H1 (cell line): ENCODE measurements at regions of chr10 and their contacts with region 1.

Region 1: DNA sequence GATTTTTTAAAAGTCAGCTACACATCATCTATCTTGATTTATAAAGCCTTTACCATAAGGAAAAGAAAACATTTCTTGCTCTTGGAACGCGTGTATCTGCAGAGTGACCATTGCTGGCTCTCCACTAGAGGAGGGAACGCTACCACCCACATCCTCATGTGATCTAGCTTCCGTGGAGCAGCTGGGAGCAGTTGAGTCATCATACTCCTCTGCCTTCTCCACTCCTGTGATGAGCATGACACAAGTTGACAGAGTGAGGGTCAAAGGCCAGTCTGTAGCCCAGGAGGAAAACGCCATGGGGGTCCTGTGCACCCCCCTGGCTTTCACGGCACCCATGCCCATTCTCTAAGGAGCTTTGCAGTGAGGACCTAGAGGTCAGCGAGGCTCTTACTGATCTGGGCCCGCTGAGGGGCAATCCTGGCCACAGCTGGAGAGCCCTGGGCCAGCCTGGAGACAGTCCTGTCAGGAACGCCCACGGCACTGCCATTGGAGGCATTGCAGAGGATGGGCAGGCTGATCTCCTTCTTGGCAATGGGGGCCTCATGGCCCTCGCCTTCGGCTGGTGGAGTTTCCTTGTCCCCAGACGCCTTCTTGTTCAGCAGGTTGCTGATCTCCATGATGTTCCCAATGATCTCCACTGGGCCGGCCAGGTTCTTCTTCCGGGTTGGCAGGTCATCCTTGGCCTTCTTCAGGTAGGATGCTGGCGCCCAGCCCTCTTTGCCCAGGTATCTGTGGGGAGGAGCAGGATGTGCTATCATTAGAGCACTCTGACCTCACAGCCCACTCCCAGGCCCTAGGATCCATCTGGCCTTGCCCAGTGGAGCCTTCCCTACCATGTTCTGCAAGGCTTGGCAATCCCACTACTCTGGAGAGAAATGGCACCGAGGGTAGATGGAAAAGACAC is 119.2 kb downstream of the NEURL1 start:
- DNase-seq: no peak
- H3K4me3 ChIP-seq: no peak overlapping the region
- H3K27ac ChIP-seq: no peak overlapping the region
- H3K4me1 ChIP-seq: no peaks in the 10 kb centered on the region
- H3K27me3 ChIP-seq: no peaks in the 10 kb centered on the region; a peak in 1 of 7 replicates
- CTCF ChIP-seq: no peak
- EP300 ChIP-seq: no peak
- POLR2A ChIP-seq: no peak
- RAD21 ChIP-seq: no peak

Region 2: GRCh38 chr10:103666087-103666761 is 53.5 kb after region 1 on chr10:
- CTCF ChIA-PET with region 1: interaction called, 16 read pairs
- POLR2A ChIA-PET with region 1: interaction called, 3 read pairs
- DNase-seq: peak in 1 of 2 experiments; percentile 76
- H3K4me3 ChIP-seq: no peak overlapping the region
- H3K27ac ChIP-seq: no peak overlapping the region
- H3K4me1 ChIP-seq: peaks cover 10 to 27% (median 17%) of the 10 kb centered on the region in 4 experiments
- H3K27me3 ChIP-seq: no peaks in the 10 kb centered on the region; a peak in 1 of 7 replicates
- CTCF ChIP-seq: peak; percentile 43 to 71 (median 64)
- EP300 ChIP-seq: no peak
- POLR2A ChIP-seq: no peak
- RAD21 ChIP-seq: peak; percentile 26 to 58; a peak in 3 of 4 replicates

Region 3: GRCh38 chr10:103678178-103678526 is 65.4 kb after region 1 on chr10:
- CTCF ChIA-PET with region 1: interaction called, 114 read pairs
- POLR2A ChIA-PET with region 1: no interaction called
- DNase-seq: no peak
- H3K4me3 ChIP-seq: no peak overlapping the region
- H3K27ac ChIP-seq: no peak overlapping the region
- H3K4me1 ChIP-seq: peaks cover 0 to 6% (median 3%) of the 10 kb centered on the region in 4 experiments; a peak in 5 of 7 replicates
- H3K27me3 ChIP-seq: no peaks in the 10 kb centered on the region
- CTCF ChIP-seq: no peak
- EP300 ChIP-seq: no peak
- POLR2A ChIP-seq: no peak
- RAD21 ChIP-seq: no peak

Region 4: GRCh38 chr10:103868200-103868599 is 255.5 kb after region 1 on chr10:
- CTCF ChIA-PET with region 1: no interaction called
- POLR2A ChIA-PET with region 1: no interaction called
- DNase-seq: no peak
- H3K4me3 ChIP-seq: no peak overlapping the region
- H3K27ac ChIP-seq: no peak overlapping the region
- H3K4me1 ChIP-seq: peaks cover 0 to 8% (median 1%) of the 10 kb centered on the region in 4 experiments; a peak in 1 of 7 replicates
- H3K27me3 ChIP-seq: no peaks in the 10 kb centered on the region
- CTCF ChIP-seq: no peak
- EP300 ChIP-seq: no peak
- POLR2A ChIP-seq: no peak
- RAD21 ChIP-seq: no peak